Left colon (tissue), 2 donors: ENCODE measurements at regions of chr1 and their contacts with region 1.

Region 1: GRCh38 chr1:20696397-20697329 is 21.1 kb downstream of the KIF17 start:
- DNase-seq: peak; percentile 78 to 87
- ATAC-seq: peak; percentile 94

Region 2: GRCh38 chr1:21189906-21190500 is 493.3 kb after region 1 on chr1:
- intact Hi-C with region 1: loop called (anchors 5 kb)
- DNase-seq: no peak
- ATAC-seq: peak; percentile 15

Region 3: GRCh38 chr1:21198929-21199328 is 502.3 kb after region 1 on chr1:
- intact Hi-C with region 1: loop called (anchors 5 kb)
- DNase-seq: no peak
- ATAC-seq: no peak